ENCODE measurements at regions of chr7 and their contacts with region 1.

Region 1: DNA sequence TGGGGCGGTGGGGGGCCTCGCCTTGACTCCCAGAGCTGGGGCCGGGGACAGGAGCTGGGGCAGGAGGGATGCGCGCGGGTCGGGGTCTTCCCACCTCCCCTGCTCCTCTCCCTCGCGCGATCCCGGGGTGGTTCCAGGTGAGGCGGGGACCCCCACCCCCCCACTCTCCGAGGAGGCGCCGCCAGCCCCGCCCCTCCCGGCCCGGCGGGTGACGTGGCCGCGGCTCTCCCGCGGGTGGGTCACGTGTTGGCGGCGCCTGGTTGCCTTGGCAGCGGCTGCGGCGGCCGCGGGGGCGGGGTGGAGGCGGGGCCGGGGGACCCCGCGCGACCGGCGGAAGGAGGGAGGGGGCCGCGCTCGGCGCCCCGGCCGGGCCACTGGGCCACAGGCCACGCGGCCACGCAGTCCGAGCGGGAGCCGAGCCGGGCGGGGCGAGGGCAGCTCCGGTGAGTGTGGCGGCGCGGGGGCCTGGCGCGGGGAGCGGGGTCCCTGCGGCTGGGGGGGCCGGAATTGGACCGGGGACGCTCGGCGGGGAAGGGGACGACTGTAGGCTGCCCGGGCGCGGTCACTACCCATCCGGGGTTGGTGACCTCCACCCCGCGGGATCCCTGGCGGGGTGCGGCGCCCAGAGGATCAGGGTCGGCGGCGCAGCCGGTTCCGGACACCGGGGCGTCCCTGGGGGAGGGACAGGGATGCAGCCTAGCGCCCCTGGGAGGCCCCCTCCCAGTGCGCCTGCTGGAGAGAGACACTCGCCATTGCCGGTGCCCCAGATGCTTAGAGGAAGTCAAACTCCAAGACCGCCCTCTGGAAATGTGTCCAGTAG is at the start of gene ORAI2:
- DNase-seq: peak; percentile 51 to 81
- ATAC-seq: peak; percentile 63 to 74
- H3K4me3 ChIP-seq: peak within 1 kb of the TSS; percentile 89
- H3K27ac ChIP-seq: peak within 1 kb of the TSS; percentile 85 to 98
- H3K4me1 ChIP-seq: peaks cover 30% of the 10 kb centered on the region
- CTCF ChIP-seq: no peak
- EP300 ChIP-seq: no peak
- POLR2A ChIP-seq: peak; percentile 56
- RAD21 ChIP-seq: no peak
- polyA plus RNA-seq, gene ORAI2: 12.8 and 14.6 TPM in 2 replicates

Region 2: DNA sequence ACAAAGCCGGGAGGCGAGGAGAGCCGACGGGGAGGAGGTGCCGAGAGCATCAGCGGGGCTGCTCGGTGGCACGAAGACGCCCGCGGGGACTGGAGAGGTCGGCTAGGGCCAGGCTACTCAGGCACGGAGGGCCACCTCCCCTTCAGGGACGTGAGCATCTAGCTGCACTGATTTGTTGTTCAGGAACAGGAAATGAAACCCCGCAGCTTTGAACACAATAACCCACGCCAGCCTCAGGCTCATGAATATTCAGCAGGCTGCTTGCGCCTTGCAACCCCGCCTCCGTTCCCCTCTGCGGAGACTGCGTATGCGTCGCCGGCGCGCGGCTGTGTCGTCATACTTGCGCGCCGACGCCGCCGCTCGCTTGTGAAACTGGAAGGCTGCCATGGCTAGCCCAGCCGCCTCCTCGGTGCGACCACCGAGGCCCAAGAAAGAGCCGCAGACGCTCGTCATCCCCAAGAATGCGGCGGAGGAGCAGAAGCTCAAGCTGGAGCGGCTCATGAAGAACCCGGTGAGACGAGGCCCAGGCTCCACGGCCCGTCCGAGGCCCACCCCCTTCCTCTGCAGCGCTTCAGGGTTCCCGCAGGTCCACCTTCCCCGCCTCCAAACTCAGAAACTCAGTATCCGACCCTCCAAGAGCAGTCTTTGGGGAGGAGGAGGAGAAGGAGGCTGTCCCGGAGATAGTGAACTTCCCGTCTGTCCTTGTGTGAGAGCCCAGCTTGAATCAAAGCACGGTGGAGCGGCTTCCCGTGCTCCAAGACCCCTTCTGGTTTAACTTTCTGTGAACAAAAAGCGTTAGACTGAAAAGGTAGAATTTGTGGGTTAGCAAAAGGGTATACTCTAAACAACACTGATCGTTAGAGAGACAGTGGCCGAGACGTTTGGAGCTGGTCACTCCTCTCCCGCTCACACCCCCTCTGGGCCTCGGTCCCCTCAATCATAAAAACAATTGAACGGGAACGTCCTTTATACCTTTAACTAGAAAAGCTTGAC is 37.1 kb before region 1 on chr7 and contains the start of gene PRKRIP1:
- CTCF ChIA-PET with region 1: interaction called, 4 read pairs
- POLR2A ChIA-PET with region 1: interaction called, 22 read pairs
- DNase-seq: peak; percentile 89 to 92
- ATAC-seq: peak; percentile 96
- H3K4me3 ChIP-seq: peak within 1 kb of the TSS; percentile 88
- H3K27ac ChIP-seq: peak within 1 kb of the TSS; percentile 81 to 89
- H3K4me1 ChIP-seq: peaks cover 11% of the 10 kb centered on the region
- CTCF ChIP-seq: no peak
- EP300 ChIP-seq: no peak
- POLR2A ChIP-seq: peak; percentile 8; the same call in 1 of the 2 replicates
- RAD21 ChIP-seq: no peak
- polyA plus RNA-seq, gene PRKRIP1: 11.5 and 15.4 TPM in 2 replicates

Region 3: GRCh38 chr7:102450242-102450641 is 16.8 kb after region 1 on chr7:
- CTCF ChIA-PET with region 1: interaction called, 10 read pairs
- POLR2A ChIA-PET with region 1: no interaction called
- DNase-seq: no peak
- ATAC-seq: peak; percentile 58 to 77; a peak in 5 of 6 replicates
- H3K4me3 ChIP-seq: no peak overlapping the region
- H3K27ac ChIP-seq: no peak overlapping the region
- H3K4me1 ChIP-seq: no peaks in the 10 kb centered on the region
- CTCF ChIP-seq: peak; percentile 22; the same call in 1 of the 3 replicates
- EP300 ChIP-seq: no peak
- POLR2A ChIP-seq: no peak
- RAD21 ChIP-seq: peak; percentile 33 to 54; a peak in 3 of 5 replicates

Region 4: GRCh38 chr7:102463841-102464576 is 30.6 kb after region 1 on chr7:
- CTCF ChIA-PET with region 1: interaction called, 7 read pairs
- POLR2A ChIA-PET with region 1: interaction called, 10 read pairs
- DNase-seq: no peak
- ATAC-seq: no peak
- H3K4me3 ChIP-seq: peak overlapping the region; percentile 77
- H3K27ac ChIP-seq: peak overlapping the region; percentile 84 to 94
- H3K4me1 ChIP-seq: peaks cover 10% of the 10 kb centered on the region; the same call in 2 of the 3 replicates
- CTCF ChIP-seq: no peak
- EP300 ChIP-seq: no peak
- POLR2A ChIP-seq: no peak
- RAD21 ChIP-seq: no peak

Measured in A549 (cell line).